ENCODE measurements at regions of chr3 and their contacts with region 1.

Region 1: DNA sequence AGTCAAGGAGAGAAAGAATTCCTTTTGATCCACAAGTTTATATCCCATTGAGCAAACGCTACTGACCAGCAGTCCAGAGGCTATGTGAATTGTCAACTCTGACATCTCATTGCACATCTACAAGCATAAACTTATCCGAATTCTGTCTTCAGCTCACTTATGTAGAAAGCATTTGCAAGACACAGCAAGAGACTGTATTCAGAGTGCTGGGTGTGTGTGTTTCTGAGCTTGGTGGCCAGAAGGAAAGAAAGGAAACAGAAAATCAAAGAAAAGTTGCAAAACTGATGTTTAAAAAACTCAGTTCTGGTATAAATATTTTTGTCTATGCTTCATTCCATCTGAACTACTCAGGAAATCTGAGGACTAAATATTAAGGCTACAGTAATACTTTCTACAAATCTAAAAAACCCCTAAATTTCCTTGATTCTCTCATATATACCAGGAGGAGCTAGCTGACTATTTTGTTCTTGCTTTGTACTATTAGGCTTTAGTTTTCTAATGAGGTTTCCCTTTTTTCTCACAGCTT is 45.5 kb downstream of the LSAMP start:
- DNase-seq: no peak
- H3K4me3 ChIP-seq: no peak overlapping the region
- H3K27ac ChIP-seq: no peak overlapping the region
- H3K4me1 ChIP-seq: no peaks in the 10 kb centered on the region
- CTCF ChIP-seq: no peak

Region 2: DNA sequence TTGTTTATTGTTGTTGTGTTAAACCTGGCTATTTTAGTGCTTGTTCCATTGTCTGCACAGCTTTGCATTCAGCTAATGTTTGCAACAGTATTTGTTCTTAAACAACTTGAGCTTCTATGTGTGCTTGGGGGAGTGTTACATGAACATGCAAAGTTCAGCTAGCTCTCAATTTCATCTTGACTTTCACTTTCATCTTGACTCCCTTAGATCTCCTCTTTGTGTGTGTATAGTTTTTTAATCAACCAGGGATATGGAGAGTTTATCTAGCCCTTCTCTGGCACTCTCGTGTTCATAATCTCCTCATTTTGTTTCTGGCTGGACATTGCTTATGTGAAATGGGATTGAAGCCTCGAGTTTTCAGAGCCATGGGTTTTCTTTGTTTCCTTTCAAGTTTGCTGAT is 1040.2 kb before region 1 on chr3:
- CTCF ChIA-PET with region 1: no interaction called
- POLR2A ChIA-PET with region 1: no interaction called
- intact Hi-C with region 1: loop called (anchors 10 kb)
- DNase-seq: no peak
- H3K4me3 ChIP-seq: no peak overlapping the region
- H3K27ac ChIP-seq: no peak overlapping the region
- H3K4me1 ChIP-seq: no peaks in the 10 kb centered on the region
- CTCF ChIP-seq: no peak

Region 3: GRCh38 chr3:115741650-115742049 is 658.1 kb before region 1 on chr3:
- CTCF ChIA-PET with region 1: no interaction called
- POLR2A ChIA-PET with region 1: no interaction called
- intact Hi-C with region 1: no loop called
- DNase-seq: no peak
- H3K4me3 ChIP-seq: no peak overlapping the region
- H3K27ac ChIP-seq: no peak overlapping the region
- H3K4me1 ChIP-seq: no peaks in the 10 kb centered on the region
- CTCF ChIP-seq: no peak

Measured in OCI-LY7 (cell line).